AG04449 (cell line): ENCODE measurements at regions of chrX and their contacts with region 1.

Region 1: GRCh38 chrX:153947009-153947769 is 2.7 kb upstream of the RENBP start:
- DNase-seq: no peak
- H3K4me3 ChIP-seq: no peak overlapping the region
- CTCF ChIP-seq: peak; percentile 79

Region 2: DNA sequence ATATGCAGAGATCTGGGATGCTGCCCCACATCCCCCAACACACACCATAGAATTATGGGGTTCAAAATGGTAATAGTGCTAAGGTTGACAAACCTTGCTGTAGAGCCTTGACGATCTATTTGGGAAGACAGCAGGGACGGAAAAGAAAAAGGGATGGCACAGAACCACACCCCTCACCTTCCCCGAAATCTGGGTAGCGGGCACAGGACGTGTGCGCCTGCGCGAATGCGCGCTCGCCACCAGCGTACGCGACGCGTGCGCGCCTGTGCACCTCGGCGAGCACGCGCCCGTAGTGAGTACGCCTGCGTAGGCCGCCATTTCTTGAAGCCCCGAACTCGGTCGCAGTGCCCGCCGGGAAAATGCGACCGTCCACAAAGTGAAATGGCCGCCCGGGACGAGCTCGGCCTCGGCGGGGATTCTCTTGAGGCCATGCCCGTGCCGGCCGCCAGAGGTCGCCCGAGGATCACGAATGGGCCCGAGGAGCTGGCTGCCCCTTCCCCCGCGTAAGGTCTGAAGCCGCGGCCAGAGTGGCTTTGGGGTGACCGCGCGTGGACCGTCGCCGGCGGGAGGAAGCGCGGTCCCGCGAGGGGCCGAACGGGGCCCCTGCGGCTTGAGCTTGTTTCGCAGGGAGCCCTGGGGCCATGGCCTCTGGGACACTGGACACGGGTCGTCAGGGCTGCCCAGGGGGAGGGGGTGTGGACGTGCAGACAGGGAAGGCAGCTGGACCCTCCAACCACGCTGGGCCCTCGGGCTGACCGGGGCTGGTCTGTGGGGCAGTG is 1005.7 kb before region 1 on chrX:
- CTCF ChIA-PET with region 1: interaction called, 13 read pairs
- POLR2A ChIA-PET with region 1: no interaction called
- DNase-seq: peak; percentile 45
- H3K4me3 ChIP-seq: peak overlapping the region; percentile 66
- CTCF ChIP-seq: peak; percentile 81

Region 3: GRCh38 chrX:153750127-153750774 is 196.9 kb before region 1 on chrX:
- CTCF ChIA-PET with region 1: interaction called, 19 read pairs
- POLR2A ChIA-PET with region 1: no interaction called
- DNase-seq: no peak
- H3K4me3 ChIP-seq: no peak overlapping the region
- CTCF ChIP-seq: no peak

Region 4: GRCh38 chrX:153763989-153764755 is 183.0 kb before region 1 on chrX and contains the start of gene PLXNB3:
- CTCF ChIA-PET with region 1: interaction called, 230 read pairs
- POLR2A ChIA-PET with region 1: interaction called, 3 read pairs
- DNase-seq: peak; percentile 9
- H3K4me3 ChIP-seq: peak within 1 kb of the TSS; percentile 62
- CTCF ChIP-seq: peak; percentile 89

Region 5: GRCh38 chrX:153926858-153927671 is 20.1 kb before region 1 on chrX:
- CTCF ChIA-PET with region 1: interaction called, 84 read pairs
- POLR2A ChIA-PET with region 1: no interaction called
- DNase-seq: no peak
- H3K4me3 ChIP-seq: peak overlapping the region; percentile 62
- CTCF ChIP-seq: no peak

Region 6: GRCh38 chrX:153934473-153935325 is 12.5 kb before region 1 on chrX and contains the start of gene NAA10:
- CTCF ChIA-PET with region 1: interaction called, 53 read pairs
- POLR2A ChIA-PET with region 1: no interaction called
- DNase-seq: no peak
- H3K4me3 ChIP-seq: peak within 1 kb of the TSS; percentile 68
- CTCF ChIP-seq: no peak

Region 7: DNA sequence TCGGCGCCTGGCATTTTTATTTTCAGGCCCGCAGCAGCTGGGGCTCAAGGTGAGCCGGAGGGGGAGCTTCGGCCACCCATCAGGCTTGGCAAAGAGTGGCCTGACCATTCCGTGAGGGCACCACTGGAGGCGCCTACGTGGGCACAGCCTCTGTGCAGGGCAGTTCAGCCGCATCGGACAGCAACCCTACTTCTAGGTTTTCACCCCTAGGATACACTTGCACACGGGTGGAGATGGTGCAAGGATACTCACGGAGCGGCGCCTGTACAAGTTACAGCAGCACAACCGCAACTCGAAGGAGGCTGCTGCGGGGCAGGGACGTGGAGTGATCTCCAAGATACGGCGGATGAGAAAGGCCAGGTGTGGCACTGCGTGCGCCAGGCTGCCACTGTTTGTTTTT is 13.6 kb after region 1 on chrX:
- CTCF ChIA-PET with region 1: interaction called, 99 read pairs
- POLR2A ChIA-PET with region 1: no interaction called
- DNase-seq: no peak
- H3K4me3 ChIP-seq: no peak overlapping the region
- CTCF ChIP-seq: no peak